Pancreas (tissue), 10 donors: ENCODE measurements at regions of chr13 and their contacts with region 1.

Region 1: DNA sequence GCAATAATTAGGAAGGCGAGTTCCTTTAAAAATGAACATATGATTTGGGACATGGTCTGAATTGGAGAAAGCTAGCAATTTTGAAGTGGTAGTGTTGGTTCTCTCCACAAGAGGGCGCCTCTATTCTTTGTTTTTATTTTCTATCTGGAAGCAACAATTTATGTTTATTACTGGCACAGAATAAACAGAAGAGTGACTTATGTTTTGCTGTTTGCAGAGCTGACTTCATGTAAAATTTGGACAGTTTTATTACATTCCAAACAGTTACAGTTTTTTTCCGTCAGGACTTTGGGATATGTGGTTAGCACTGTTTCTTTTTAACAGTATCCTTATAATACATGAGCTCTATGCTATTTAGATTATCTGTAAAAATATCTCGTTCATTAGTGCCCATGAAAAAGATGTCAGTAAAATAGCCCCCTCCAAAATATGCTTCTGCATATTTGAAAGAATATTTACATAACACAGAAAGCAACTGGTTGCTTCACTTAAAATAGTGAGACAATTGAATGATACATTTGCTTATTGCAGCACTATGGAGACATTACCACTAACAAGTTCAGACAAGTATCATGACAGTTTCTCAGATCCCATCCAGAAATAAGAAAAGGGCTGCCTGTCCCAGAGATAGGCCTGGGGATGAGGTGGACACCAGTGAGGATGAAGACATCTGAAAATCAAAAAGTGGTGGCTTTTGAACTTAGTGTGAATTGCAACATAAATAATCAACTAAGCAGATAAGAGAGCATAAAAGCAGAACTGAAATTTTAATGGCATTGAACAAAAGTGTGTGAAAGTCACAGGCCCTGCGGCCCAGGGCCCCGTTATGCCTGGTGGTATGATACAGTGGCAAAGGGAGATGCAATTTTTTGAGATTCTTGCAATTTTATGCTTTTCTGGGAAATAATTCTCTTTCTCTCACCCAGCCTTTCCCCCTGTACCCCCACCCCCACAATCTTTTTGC is 32.3 kb upstream of the FGF9 start:
- DNase-seq: peak in 1 of 6 donors; percentile 31
- ATAC-seq: peak; percentile 28 to 64 (median 54)
- H3K4me3 ChIP-seq: no peak overlapping the region
- H3K27ac ChIP-seq: no peak overlapping the region
- H3K4me1 ChIP-seq: no peaks in the 10 kb centered on the region
- H3K27me3 ChIP-seq: no peaks in the 10 kb centered on the region
- CTCF ChIP-seq: peak; percentile 60 to 89 (median 70)

Region 2: GRCh38 chr13:22176968-22177520 is 538.4 kb after region 1 on chr13:
- intact Hi-C with region 1: no loop called
- DNase-seq: no peak
- ATAC-seq: no peak
- H3K4me3 ChIP-seq: no peak overlapping the region
- H3K27ac ChIP-seq: no peak overlapping the region
- H3K4me1 ChIP-seq: no peaks in the 10 kb centered on the region
- H3K27me3 ChIP-seq: no peaks in the 10 kb centered on the region
- CTCF ChIP-seq: no peak

Region 3: DNA sequence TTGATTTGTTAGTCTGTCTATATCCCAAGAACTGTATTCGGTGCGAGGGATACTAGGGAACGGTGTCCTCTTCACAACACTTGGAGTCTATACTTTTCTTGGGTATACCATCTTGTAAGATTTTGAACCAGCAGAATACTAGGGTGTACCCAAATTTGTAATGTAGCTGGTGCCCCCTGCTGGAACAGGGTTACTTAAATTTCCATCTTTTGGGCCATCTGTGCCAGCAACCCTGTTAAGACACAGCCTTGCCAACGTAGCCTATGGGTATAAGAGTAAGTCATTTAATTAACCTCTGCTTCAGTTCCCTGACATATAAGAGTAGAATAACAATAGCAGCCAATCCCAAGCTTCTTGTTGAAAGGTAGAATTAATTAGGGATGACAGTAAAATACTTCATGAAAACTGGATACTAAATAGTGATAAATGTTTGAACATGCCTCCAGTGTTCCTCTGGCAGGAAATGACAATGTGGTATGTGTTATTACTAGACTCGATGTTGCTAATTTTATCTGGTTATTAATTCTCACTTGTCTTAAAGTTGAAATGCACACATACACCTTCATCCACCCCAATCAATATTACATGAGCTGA is 639.8 kb after region 1 on chr13:
- intact Hi-C with region 1: loop called in 2 of 3 experiments (anchors 5 to 10 kb)
- DNase-seq: peak; percentile 22 to 73 (median 40)
- ATAC-seq: peak in 3 of 4 donors; percentile 77 to 85 (median 78)
- H3K4me3 ChIP-seq: no peak overlapping the region
- H3K27ac ChIP-seq: no peak overlapping the region
- H3K4me1 ChIP-seq: no peaks in the 10 kb centered on the region
- H3K27me3 ChIP-seq: no peaks in the 10 kb centered on the region
- CTCF ChIP-seq: peak in 3 of 4 donors; percentile 17 to 29 (median 26)

Region 4: GRCh38 chr13:22285867-22286266 is 647.3 kb after region 1 on chr13:
- intact Hi-C with region 1: loop called in 1 of 3 experiments (anchors 10 kb)
- DNase-seq: no peak
- ATAC-seq: no peak
- H3K4me3 ChIP-seq: no peak overlapping the region
- H3K27ac ChIP-seq: no peak overlapping the region
- H3K4me1 ChIP-seq: no peaks in the 10 kb centered on the region
- H3K27me3 ChIP-seq: no peaks in the 10 kb centered on the region
- CTCF ChIP-seq: no peak